Naive thymus-derived CD4-positive, alpha-beta T cell (primary cell): ENCODE measurements at regions of chr16 and their contacts with region 1.

Region 1: GRCh38 chr16:13453938-13454553 is 465.9 kb upstream of the ERCC4 start:
- DNase-seq: peak in 2 of 9 donors; percentile 4 to 8
- ATAC-seq: no peak
- H3K4me3 ChIP-seq: no peak overlapping the region
- H3K4me3 Mint-ChIP-seq: no peak overlapping the region
- H3K27ac ChIP-seq: no peak overlapping the region
- H3K27ac Mint-ChIP-seq: no peak overlapping the region
- H3K4me1 ChIP-seq: no peaks in the 10 kb centered on the region
- H3K4me1 Mint-ChIP-seq: no peaks in the 10 kb centered on the region
- H3K27me3 ChIP-seq: no peaks in the 10 kb centered on the region
- H3K27me3 Mint-ChIP-seq: peaks cover 0 to 18% (median 0%) of the 10 kb centered on the region in 5 donors

Region 2: DNA sequence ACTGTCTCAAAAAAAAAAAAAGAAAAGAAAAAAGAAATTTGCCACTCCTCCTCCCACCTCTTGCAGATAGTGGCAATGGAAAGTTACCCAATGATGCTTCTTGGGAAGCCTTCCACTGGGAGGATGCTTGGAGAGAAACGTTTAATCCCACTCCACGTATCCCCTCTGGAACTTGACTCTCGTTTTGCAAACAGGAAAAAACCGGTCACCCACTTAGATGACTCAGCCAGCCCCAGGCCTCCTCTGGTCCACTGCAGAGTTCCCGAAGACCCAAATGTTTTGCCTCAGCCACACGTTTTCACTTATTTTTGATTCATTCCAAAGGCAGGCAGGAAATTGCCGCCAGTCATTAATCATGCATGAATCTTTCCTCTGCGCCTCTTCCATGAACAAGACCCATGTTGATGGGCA is 1498.3 kb before region 1 on chr16:
- CTCF ChIA-PET with region 1: no interaction called
- POLR2A ChIA-PET with region 1: no interaction called
- intact Hi-C with region 1: loop called in 1 of 2 experiments (anchors 10 kb)
- DNase-seq: no peak
- ATAC-seq: no peak
- H3K4me3 ChIP-seq: no peak overlapping the region
- H3K4me3 Mint-ChIP-seq: no peak overlapping the region
- H3K27ac ChIP-seq: no peak overlapping the region
- H3K27ac Mint-ChIP-seq: no peak overlapping the region
- H3K4me1 ChIP-seq: no peaks in the 10 kb centered on the region
- H3K4me1 Mint-ChIP-seq: no peaks in the 10 kb centered on the region
- H3K27me3 ChIP-seq: no peaks in the 10 kb centered on the region
- H3K27me3 Mint-ChIP-seq: no peaks in the 10 kb centered on the region

Region 3: DNA sequence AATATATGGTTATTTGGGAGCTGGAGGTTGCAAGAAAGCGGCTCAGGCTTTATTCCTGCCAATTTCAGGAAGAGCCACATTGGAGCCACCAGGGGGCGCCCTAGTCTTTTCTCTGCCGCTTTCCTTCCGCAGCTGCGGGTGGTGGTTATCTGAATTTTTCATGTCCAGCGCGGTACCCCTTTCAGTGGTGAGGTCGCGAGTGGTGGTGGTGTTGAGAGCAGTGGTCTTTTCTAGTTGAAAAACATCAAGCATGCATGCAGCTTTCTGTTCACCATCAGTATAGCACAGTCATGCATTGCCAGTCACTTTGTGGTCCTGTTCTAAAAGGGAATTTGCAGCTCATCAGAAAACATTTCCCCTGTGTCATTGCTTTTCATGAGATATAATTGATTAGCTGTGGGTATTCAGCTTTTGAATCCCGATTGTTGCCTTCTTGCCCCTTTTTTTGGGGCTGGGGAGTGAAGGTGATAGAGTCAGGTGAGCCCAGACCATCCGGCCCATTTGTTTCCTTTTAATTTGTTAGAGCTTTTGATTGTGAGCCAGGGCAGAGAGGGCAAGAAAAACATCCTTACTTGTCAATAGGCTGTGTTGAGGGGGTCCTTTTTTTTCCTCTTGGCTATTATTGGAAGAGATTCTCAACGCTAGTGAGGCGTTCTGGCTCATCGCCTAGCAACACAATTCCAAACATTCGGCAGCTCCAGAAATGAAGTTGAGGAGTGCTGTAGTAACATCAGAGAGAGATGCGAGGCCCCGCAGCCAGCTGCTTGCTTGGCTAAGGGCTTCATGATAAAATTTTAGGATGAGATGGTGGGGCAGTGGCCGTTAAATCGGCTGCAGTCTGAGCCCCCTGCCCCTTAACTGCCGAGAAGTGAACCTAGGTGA is 1358.5 kb before region 1 on chr16:
- CTCF ChIA-PET with region 1: no interaction called
- POLR2A ChIA-PET with region 1: no interaction called
- intact Hi-C with region 1: loop called in 1 of 2 experiments (anchors 10 kb)
- DNase-seq: peak; percentile 27 to 70 (median 57)
- ATAC-seq: peak; percentile 76
- H3K4me3 ChIP-seq: peak overlapping the region; percentile 31
- H3K4me3 Mint-ChIP-seq: peak overlapping the region; percentile 70 to 86 (median 82)
- H3K27ac ChIP-seq: no peak overlapping the region
- H3K27ac Mint-ChIP-seq: peak overlapping the region in 7 of 9 donors; percentile 25 to 81 (median 63)
- H3K4me1 ChIP-seq: peaks cover 0 to 2% of the 10 kb centered on the region in 2 donors
- H3K4me1 Mint-ChIP-seq: peaks cover 7 to 52% (median 38%) of the 10 kb centered on the region in 7 donors
- H3K27me3 ChIP-seq: no peaks in the 10 kb centered on the region
- H3K27me3 Mint-ChIP-seq: no peaks in the 10 kb centered on the region

Region 4: DNA sequence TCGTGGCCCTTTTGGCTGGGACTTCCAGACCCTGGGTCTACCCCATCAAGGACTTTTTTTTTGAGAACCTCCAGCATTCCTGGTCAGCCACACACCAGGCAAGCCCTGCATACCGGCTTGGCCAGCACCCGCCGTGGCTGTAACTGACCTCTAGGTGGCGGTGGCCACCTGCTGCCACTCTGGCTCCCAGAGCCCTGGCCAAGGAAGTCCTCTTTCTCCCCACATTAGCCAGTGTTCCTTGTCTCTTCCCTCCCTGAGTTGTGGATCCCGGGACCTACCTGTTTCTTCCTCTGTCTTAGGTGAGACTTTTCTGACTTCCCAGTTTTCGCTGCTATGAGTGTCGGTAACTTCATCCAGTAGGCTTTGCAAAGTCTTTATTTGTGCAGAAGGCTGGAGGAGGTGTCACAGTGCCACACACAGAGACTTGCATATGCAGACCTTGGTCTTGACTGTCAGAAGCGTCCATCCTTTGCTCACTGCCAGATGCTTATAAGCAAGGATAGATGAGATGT is 998.7 kb before region 1 on chr16:
- CTCF ChIA-PET with region 1: no interaction called
- POLR2A ChIA-PET with region 1: no interaction called
- intact Hi-C with region 1: loop called in 1 of 2 experiments (anchors 5 kb)
- DNase-seq: peak in 6 of 9 donors; percentile 19 to 55 (median 22)
- ATAC-seq: peak; percentile 54
- H3K4me3 ChIP-seq: no peak overlapping the region
- H3K4me3 Mint-ChIP-seq: no peak overlapping the region
- H3K27ac ChIP-seq: no peak overlapping the region
- H3K27ac Mint-ChIP-seq: peak overlapping the region in 3 of 9 donors; percentile 19 to 43 (median 26)
- H3K4me1 ChIP-seq: peaks cover 0 to 24% of the 10 kb centered on the region in 2 donors
- H3K4me1 Mint-ChIP-seq: peaks cover 28 to 44% (median 35%) of the 10 kb centered on the region in 7 donors
- H3K27me3 ChIP-seq: no peaks in the 10 kb centered on the region
- H3K27me3 Mint-ChIP-seq: no peaks in the 10 kb centered on the region

Region 5: GRCh38 chr16:13021996-13022395 is 432.1 kb before region 1 on chr16:
- CTCF ChIA-PET with region 1: no interaction called
- POLR2A ChIA-PET with region 1: no interaction called
- intact Hi-C with region 1: no loop called
- DNase-seq: no peak
- ATAC-seq: no peak
- H3K4me3 ChIP-seq: no peak overlapping the region
- H3K4me3 Mint-ChIP-seq: no peak overlapping the region
- H3K27ac ChIP-seq: no peak overlapping the region
- H3K27ac Mint-ChIP-seq: no peak overlapping the region
- H3K4me1 ChIP-seq: no peaks in the 10 kb centered on the region
- H3K4me1 Mint-ChIP-seq: peaks cover 0 to 2% (median 0%) of the 10 kb centered on the region in 7 donors
- H3K27me3 ChIP-seq: no peaks in the 10 kb centered on the region
- H3K27me3 Mint-ChIP-seq: peaks cover 0 to 24% (median 12%) of the 10 kb centered on the region in 5 donors